CD4-positive, alpha-beta T cell (primary cell): ENCODE measurements at regions of chr2 and their contacts with region 1.

Region 1: DNA sequence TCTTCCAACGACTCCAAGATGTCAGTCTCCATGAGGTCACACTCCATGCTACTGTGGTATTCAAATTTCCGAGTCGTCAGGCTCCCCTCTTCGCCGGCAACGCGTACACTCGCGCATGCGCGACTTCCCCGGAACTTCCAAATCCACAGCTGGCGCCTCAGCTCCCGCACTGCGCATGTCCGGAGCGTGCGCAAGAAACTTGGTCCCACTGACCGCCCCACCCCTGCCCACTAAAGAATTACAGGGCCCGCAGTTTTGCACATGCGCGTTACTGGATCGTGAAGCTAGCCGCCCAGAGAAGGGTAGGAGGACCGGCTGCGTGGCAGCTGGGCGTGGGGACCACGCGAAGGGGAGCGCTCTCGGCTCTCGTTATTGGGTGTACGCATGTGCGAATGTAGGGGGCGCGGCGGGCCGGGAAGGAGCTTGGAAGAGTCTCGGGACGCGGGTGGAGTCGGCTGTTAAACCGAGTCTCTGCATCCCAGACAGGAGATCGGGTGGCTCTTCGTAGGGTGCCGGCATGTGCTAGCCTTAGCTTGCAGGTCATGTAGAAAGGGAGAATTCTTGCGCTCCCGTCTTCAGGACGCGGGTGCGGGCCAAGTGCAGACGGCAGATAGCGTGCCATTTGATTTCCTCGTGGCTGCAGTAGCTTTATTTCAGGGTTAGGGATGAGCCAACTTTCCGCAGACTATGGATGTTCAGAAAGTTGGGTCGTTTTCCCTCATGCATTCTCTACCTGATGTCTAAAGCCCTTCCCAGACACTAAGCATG is at the start of gene FAM98A:
- DNase-seq: peak; percentile 97 to 100 (median 99)
- ATAC-seq: peak; percentile 91
- H3K4me3 ChIP-seq: peak within 1 kb of the TSS; percentile 95
- H3K4me3 Mint-ChIP-seq: peak within 1 kb of the TSS; percentile 96
- H3K27ac ChIP-seq: peak within 1 kb of the TSS; percentile 77 to 86
- H3K27ac Mint-ChIP-seq: peak within 1 kb of the TSS; percentile 92
- H3K4me1 ChIP-seq: peaks cover 16% of the 10 kb centered on the region
- H3K4me1 Mint-ChIP-seq: peaks cover 46% of the 10 kb centered on the region
- H3K27me3 ChIP-seq: no peaks in the 10 kb centered on the region
- H3K27me3 Mint-ChIP-seq: no peaks in the 10 kb centered on the region
- CTCF ChIP-seq: no peak
- total RNA-seq, gene FAM98A: 20.1 to 21.6 TPM

Region 2: DNA sequence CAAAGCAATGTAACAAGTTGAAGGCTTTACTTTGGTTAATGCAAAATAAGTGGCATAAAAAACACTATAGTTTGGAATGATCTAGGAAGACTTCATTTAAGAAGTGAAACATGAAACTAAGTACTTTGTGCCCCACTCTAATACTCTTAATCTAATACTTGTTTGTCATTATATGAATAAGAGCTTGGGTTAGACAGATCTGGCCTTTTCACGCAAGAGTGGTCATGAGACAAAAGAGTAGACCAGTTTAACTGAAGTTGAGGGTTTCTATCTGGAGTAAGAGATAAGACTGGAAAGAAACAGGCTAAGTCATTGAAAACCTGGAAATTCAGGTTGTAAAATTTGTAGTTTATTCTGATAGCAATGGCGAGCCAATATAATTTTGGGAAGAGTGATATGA is 1430.8 kb before region 1 on chr2:
- CTCF ChIA-PET with region 1: no interaction called
- POLR2A ChIA-PET with region 1: no interaction called
- intact Hi-C with region 1: loop called in 1 of 2 experiments (anchors 2 kb)
- DNase-seq: no peak
- ATAC-seq: no peak
- H3K4me3 ChIP-seq: no peak overlapping the region
- H3K4me3 Mint-ChIP-seq: peak overlapping the region; percentile 1
- H3K27ac ChIP-seq: no peak overlapping the region
- H3K27ac Mint-ChIP-seq: no peak overlapping the region
- H3K4me1 ChIP-seq: peaks cover 4% of the 10 kb centered on the region
- H3K4me1 Mint-ChIP-seq: peaks cover 56% of the 10 kb centered on the region
- H3K27me3 ChIP-seq: no peaks in the 10 kb centered on the region
- H3K27me3 Mint-ChIP-seq: no peaks in the 10 kb centered on the region
- CTCF ChIP-seq: no peak

Region 3: DNA sequence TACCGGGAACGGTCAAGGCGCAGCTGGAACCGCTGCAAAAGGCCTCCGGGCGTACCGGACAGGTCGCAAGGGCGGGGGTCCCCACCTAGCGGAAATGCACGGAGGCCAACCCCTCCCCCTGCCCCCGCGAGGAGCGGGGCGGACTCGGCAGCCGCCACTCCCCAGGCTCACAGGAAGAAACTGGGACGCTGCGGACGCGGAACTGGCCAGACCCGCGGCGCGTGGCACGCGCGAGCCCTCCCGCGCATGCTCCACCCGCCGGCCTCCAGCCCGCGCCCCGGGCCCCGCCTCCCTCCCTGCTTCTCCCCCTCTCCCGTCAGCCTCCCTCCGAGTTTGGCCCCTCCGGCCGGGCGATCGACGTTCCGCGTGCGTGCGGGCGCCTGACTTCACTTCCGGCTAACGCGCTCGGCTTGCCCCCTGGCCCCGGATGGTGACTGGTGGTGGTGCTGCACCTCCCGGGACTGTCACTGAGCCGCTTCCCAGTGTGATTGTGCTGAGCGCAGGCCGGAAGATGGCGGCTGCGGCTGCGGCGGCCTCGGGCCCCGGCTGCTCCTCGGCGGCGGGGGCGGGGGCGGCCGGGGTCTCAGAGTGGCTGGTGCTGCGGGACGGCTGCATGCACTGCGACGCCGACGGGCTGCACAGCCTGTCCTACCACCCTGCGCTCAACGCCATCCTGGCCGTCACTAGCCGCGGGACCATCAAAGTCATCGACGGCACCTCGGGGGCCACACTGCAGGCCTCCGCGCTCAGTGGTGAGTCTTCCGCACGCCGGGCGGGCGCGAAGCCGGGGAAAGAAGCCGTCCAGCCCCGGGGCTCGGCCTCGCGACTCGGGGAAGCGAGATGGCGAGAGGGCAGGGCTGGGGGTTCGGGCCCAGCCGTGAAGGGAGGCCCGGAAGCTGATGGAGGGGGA is 1242.4 kb before region 1 on chr2 and contains the start of gene BIRC6:
- CTCF ChIA-PET with region 1: no interaction called
- POLR2A ChIA-PET with region 1: no interaction called
- intact Hi-C with region 1: loop called in 1 of 2 experiments (anchors 5 kb)
- DNase-seq: peak; percentile 71 to 96 (median 89)
- ATAC-seq: peak; percentile 89
- H3K4me3 ChIP-seq: peak within 1 kb of the TSS; percentile 97
- H3K4me3 Mint-ChIP-seq: peak within 1 kb of the TSS; percentile 98
- H3K27ac ChIP-seq: peak within 1 kb of the TSS; percentile 75 to 87
- H3K27ac Mint-ChIP-seq: peak within 1 kb of the TSS; percentile 81
- H3K4me1 ChIP-seq: peaks cover 23% of the 10 kb centered on the region
- H3K4me1 Mint-ChIP-seq: peaks cover 44% of the 10 kb centered on the region
- H3K27me3 ChIP-seq: no peaks in the 10 kb centered on the region
- H3K27me3 Mint-ChIP-seq: no peaks in the 10 kb centered on the region
- CTCF ChIP-seq: no peak
- total RNA-seq, gene BIRC6: 110 to 113 TPM

Region 4: GRCh38 chr2:32627814-32628579 is 971.4 kb before region 1 on chr2 and contains the start of gene TTC27:
- CTCF ChIA-PET with region 1: no interaction called
- POLR2A ChIA-PET with region 1: interaction called, 3 read pairs
- intact Hi-C with region 1: loop called (anchors 5 kb)
- DNase-seq: peak; percentile 91 to 97 (median 94)
- ATAC-seq: peak; percentile 99
- H3K4me3 ChIP-seq: peak within 1 kb of the TSS; percentile 88
- H3K4me3 Mint-ChIP-seq: peak within 1 kb of the TSS; percentile 96
- H3K27ac ChIP-seq: peak within 1 kb of the TSS; percentile 50 to 60
- H3K27ac Mint-ChIP-seq: peak within 1 kb of the TSS; percentile 81
- H3K4me1 ChIP-seq: peaks cover 18% of the 10 kb centered on the region
- H3K4me1 Mint-ChIP-seq: peaks cover 39% of the 10 kb centered on the region
- H3K27me3 ChIP-seq: no peaks in the 10 kb centered on the region
- H3K27me3 Mint-ChIP-seq: no peaks in the 10 kb centered on the region
- CTCF ChIP-seq: no peak
- total RNA-seq, gene TTC27: 11.6 to 17.6 TPM

Region 5: GRCh38 chr2:33475224-33476130 is 123.9 kb before region 1 on chr2:
- CTCF ChIA-PET with region 1: interaction called, 10 read pairs
- POLR2A ChIA-PET with region 1: interaction called, 54 read pairs
- intact Hi-C with region 1: loop called (anchors 1 to 2 kb)
- DNase-seq: peak; percentile 65 to 93 (median 78)
- ATAC-seq: peak; percentile 79
- H3K4me3 ChIP-seq: peak overlapping the region; percentile 69
- H3K4me3 Mint-ChIP-seq: peak overlapping the region; percentile 96
- H3K27ac ChIP-seq: peak overlapping the region; percentile 87 to 92
- H3K27ac Mint-ChIP-seq: peak overlapping the region; percentile 97
- H3K4me1 ChIP-seq: peaks cover 15% of the 10 kb centered on the region
- H3K4me1 Mint-ChIP-seq: peaks cover 36% of the 10 kb centered on the region
- H3K27me3 ChIP-seq: no peaks in the 10 kb centered on the region
- H3K27me3 Mint-ChIP-seq: no peaks in the 10 kb centered on the region
- CTCF ChIP-seq: peak; percentile 90

Region 6: DNA sequence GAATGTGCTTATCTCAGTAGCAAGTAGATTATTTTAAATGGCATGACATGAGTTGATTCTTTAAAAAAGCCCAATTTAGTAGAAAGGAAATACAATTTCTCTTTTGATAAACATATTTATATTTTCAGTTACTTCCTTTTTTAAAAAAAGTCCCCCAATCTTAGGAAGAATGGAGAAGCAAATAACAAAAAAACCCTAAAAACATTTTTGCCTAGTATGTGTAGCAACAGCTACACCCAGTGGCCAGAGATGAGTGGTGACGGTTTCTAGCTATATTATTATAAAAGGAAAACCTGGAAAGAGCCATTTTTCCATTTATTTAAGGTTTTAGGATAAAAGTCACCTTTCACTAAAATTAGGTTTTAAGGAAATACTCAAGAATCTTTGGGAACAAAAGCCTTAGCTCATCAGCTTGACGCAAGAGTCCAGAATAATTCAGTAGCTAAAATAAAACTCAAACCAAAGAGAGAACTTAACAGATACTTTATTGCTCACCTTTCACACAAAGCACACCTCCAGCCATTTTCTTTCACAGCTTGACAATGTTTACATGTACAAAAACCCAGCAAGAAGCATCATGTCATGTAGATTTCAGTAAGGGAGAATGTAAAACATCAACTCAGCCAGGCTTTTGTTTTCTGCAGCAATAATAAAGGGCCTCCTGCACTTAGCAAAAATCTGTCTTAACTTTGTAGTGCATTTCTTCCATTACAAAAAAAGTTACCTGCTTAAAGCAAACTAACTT is 16.0 kb before region 1 on chr2:
- CTCF ChIA-PET with region 1: interaction called, 11 read pairs
- POLR2A ChIA-PET with region 1: interaction called, 11 read pairs
- intact Hi-C with region 1: no loop called
- DNase-seq: peak in 9 of 14 experiments; percentile 1 to 69 (median 18)
- ATAC-seq: peak; percentile 57
- H3K4me3 ChIP-seq: no peak overlapping the region
- H3K4me3 Mint-ChIP-seq: no peak overlapping the region
- H3K27ac ChIP-seq: no peak overlapping the region
- H3K27ac Mint-ChIP-seq: no peak overlapping the region
- H3K4me1 ChIP-seq: no peaks in the 10 kb centered on the region
- H3K4me1 Mint-ChIP-seq: peaks cover 11% of the 10 kb centered on the region
- H3K27me3 ChIP-seq: no peaks in the 10 kb centered on the region
- H3K27me3 Mint-ChIP-seq: no peaks in the 10 kb centered on the region
- CTCF ChIP-seq: peak; percentile 94